ENCODE measurements at regions of chr5 and their contacts with region 1.

Region 1: GRCh38 chr5:131916481-131916880 is 29.0 kb downstream of the MEIKIN start:
- DNase-seq: no peak
- H3K4me3 ChIP-seq: no peak overlapping the region
- H3K27ac ChIP-seq: no peak overlapping the region
- H3K4me1 ChIP-seq: no peaks in the 10 kb centered on the region
- H3K27me3 ChIP-seq: peaks cover 11% of the 10 kb centered on the region; the same call in 1 of the 2 replicates
- CTCF ChIP-seq: no peak

Region 2: GRCh38 chr5:131096774-131097710 is 819.4 kb before region 1 on chr5:
- CTCF ChIA-PET with region 1: no interaction called
- POLR2A ChIA-PET with region 1: no interaction called
- intact Hi-C with region 1: no loop called
- DNase-seq: no peak
- H3K4me3 ChIP-seq: no peak overlapping the region
- H3K27ac ChIP-seq: no peak overlapping the region
- H3K4me1 ChIP-seq: no peaks in the 10 kb centered on the region
- H3K27me3 ChIP-seq: no peaks in the 10 kb centered on the region
- CTCF ChIP-seq: no peak

Region 3: GRCh38 chr5:131810510-131811249 is 105.8 kb before region 1 on chr5:
- CTCF ChIA-PET with region 1: no interaction called
- POLR2A ChIA-PET with region 1: interaction called, 10 read pairs
- intact Hi-C with region 1: no loop called
- DNase-seq: no peak
- H3K4me3 ChIP-seq: no peak overlapping the region
- H3K27ac ChIP-seq: no peak overlapping the region
- H3K4me1 ChIP-seq: peaks cover 8% of the 10 kb centered on the region; the same call in 1 of the 2 replicates
- H3K27me3 ChIP-seq: no peaks in the 10 kb centered on the region
- CTCF ChIP-seq: peak; percentile 39

Measured in PC-9 (cell line).